ENCODE measurements at regions of chr2 and their contacts with region 1.

Region 1: GRCh38 chr2:64831134-64831976 is 157.8 kb upstream of the SLC1A4 start:
- DNase-seq: peak; percentile 91
- H3K4me3 ChIP-seq: no peak overlapping the region
- H3K27ac ChIP-seq: peak overlapping the region; percentile 86
- H3K4me1 ChIP-seq: peaks cover 20% of the 10 kb centered on the region
- H3K27me3 ChIP-seq: no peaks in the 10 kb centered on the region
- CTCF ChIP-seq: peak; percentile 88 to 93
- POLR2A ChIP-seq: peak; percentile 19

Region 2: DNA sequence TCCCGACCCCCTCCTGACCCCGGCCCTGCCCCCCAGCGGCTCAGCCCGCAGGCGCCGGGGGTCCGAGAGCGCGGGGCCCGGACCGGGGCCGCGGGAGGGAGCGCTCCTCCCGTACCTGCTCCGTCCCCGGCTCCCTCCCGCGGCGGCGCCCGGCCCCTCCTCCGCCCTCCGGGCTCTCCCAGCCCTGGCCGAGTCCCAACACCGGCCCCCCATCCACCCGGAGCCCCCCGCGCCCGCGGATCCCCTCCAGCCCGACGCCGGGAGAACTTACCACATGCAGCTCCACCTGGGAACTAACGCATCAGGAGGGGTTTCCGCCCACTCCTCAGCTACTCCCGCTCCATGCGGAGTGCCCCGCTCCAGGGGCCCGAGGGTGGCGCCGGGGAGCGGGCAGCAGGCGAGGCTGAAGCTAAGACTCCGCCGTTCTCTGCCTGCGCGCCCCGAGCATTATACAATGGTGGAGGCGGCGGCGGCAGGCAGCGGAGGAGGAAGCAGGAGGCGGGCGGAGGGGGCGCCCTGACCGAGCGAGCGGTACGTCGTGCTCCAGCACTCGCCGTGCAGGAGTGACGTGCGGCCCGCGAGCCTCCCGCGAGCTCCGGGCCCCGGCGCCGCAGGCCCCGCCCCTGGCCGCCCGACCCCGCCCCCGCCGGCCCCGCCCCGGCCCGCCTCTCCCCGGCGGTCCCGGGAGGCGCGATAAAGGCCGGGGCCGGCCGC is 177.8 kb before region 1 on chr2 and contains the start of gene SERTAD2:
- CTCF ChIA-PET with region 1: interaction called, 42 read pairs
- POLR2A ChIA-PET with region 1: interaction called, 11 read pairs
- dilution Hi-C with region 1: no loop called
- intact Hi-C with region 1: loop called (anchors 1 kb)
- DNase-seq: peak; percentile 87
- H3K4me3 ChIP-seq: peak within 1 kb of the TSS; percentile 72 to 89 (median 83)
- H3K27ac ChIP-seq: peak within 1 kb of the TSS; percentile 91
- H3K4me1 ChIP-seq: peaks cover 21% of the 10 kb centered on the region
- H3K27me3 ChIP-seq: no peaks in the 10 kb centered on the region
- CTCF ChIP-seq: peak in 1 of 2 donors; percentile 14
- POLR2A ChIP-seq: peak; percentile 63
- total RNA-seq, gene SERTAD2: 11.2 and 12.0 TPM in 2 replicates

Region 3: GRCh38 chr2:64767670-64768468 is 63.5 kb before region 1 on chr2:
- CTCF ChIA-PET with region 1: interaction called, 22 read pairs
- POLR2A ChIA-PET with region 1: no interaction called
- dilution Hi-C with region 1: no loop called
- intact Hi-C with region 1: loop called (anchors 1 kb)
- DNase-seq: peak; percentile 87
- H3K4me3 ChIP-seq: peak overlapping the region; percentile 57 to 80 (median 75)
- H3K27ac ChIP-seq: peak overlapping the region; percentile 87
- H3K4me1 ChIP-seq: peaks cover 12% of the 10 kb centered on the region
- H3K27me3 ChIP-seq: no peaks in the 10 kb centered on the region
- CTCF ChIP-seq: no peak
- POLR2A ChIP-seq: peak; percentile 76

Region 4: GRCh38 chr2:64792307-64792706 is 39.0 kb before region 1 on chr2:
- CTCF ChIA-PET with region 1: interaction called, 61 read pairs
- POLR2A ChIA-PET with region 1: interaction called, 6 read pairs
- dilution Hi-C with region 1: no loop called
- intact Hi-C with region 1: loop called (anchors 1 kb)
- DNase-seq: peak; percentile 43
- H3K4me3 ChIP-seq: no peak overlapping the region
- H3K27ac ChIP-seq: peak overlapping the region; percentile 82
- H3K4me1 ChIP-seq: peaks cover 53% of the 10 kb centered on the region
- H3K27me3 ChIP-seq: no peaks in the 10 kb centered on the region
- CTCF ChIP-seq: peak in 1 of 2 donors; percentile 21
- POLR2A ChIP-seq: no peak

Region 5: DNA sequence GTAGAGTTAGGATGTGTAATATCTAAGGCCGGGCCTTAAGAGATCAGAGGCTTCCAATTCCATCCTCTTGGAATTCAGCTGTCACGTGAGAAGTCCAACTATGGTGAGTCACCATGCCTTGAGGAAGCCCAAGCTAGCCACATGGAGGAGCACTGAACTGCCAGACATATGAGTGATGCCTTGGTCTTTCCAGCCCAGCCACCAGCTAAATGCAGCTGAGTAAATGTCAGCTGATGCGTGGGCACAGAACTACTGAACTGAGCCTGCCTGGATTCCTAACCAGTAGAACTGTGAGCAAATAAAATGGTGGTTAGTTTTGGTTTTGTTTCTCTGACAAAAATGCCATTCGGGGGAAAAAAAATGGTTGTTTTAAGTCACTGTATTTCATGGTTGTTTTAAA is 23.9 kb before region 1 on chr2:
- CTCF ChIA-PET with region 1: interaction called, 15 read pairs
- POLR2A ChIA-PET with region 1: no interaction called
- dilution Hi-C with region 1: no loop called
- intact Hi-C with region 1: loop called (anchors 1 kb)
- DNase-seq: peak; percentile 89
- H3K4me3 ChIP-seq: no peak overlapping the region
- H3K27ac ChIP-seq: no peak overlapping the region
- H3K4me1 ChIP-seq: peaks cover 15% of the 10 kb centered on the region
- H3K27me3 ChIP-seq: no peaks in the 10 kb centered on the region
- CTCF ChIP-seq: peak in 1 of 2 donors; percentile 1
- POLR2A ChIP-seq: no peak

Region 6: DNA sequence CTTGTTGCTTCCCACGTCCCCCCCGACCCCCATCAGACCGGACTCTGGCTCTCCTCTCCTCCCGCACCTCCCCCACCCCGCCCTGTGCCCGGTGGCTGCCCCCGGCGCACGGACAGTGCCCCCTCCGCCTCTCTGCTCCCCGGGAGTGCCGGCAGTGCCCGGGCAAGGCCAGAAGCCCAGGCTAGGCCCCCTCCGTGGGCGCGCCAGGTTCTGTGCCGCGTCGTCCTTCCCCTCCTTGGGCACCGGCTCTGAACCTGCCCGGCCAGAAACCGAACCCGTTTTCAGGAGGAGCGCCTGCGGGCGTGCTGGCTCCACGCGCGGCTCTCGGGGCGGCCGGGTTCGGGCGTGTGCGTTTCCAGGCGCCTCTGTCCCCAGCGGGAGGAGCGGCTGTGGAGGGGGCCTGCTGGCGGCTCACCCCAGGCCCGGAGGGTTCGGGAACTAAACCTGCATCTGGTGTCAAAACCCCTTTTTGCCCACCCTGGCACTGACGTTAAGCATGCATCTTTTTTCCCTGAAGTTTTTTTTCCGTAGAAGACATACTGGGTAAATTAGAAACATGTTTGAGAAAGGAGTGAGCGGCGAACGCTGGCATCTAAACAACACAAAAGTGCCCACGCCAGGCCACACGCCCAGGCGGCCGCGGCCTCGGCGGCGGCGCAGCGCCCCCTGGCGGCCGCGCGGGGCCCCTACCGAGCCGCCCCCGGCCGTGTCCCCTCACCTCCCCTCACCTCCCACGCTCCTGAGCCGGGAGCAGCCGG is 33.9 kb after region 1 on chr2:
- CTCF ChIA-PET with region 1: interaction called, 24 read pairs
- POLR2A ChIA-PET with region 1: no interaction called
- dilution Hi-C with region 1: no loop called
- intact Hi-C with region 1: loop called (anchors 1 kb)
- DNase-seq: peak; percentile 71
- H3K4me3 ChIP-seq: peak overlapping the region; percentile 42 to 46 (median 44)
- H3K27ac ChIP-seq: peak overlapping the region; percentile 66
- H3K4me1 ChIP-seq: peaks cover 6% of the 10 kb centered on the region
- H3K27me3 ChIP-seq: no peaks in the 10 kb centered on the region
- CTCF ChIP-seq: peak; percentile 43 to 94
- POLR2A ChIP-seq: no peak

Measured in endothelial cell of umbilical vein (primary cell).